H1 (cell line): ENCODE measurements at regions of chr5 and their contacts with region 1.

Region 1: GRCh38 chr5:1511651-1512540 is 11.9 kb downstream of the LPCAT1 start:
- DNase-seq: peak in 1 of 2 experiments; percentile 45
- H3K4me3 ChIP-seq: no peak overlapping the region
- H3K27ac ChIP-seq: peak overlapping the region; percentile 46; the same call in 1 of the 2 replicates
- H3K4me1 ChIP-seq: peaks cover 16 to 64% (median 51%) of the 10 kb centered on the region in 4 experiments
- H3K27me3 ChIP-seq: no peaks in the 10 kb centered on the region
- CTCF ChIP-seq: peak in 2 of 3 experiments; percentile 49 to 74; a peak in 3 of 4 replicates
- EP300 ChIP-seq: no peak
- POLR2A ChIP-seq: no peak
- RAD21 ChIP-seq: peak; percentile 40 to 63

Region 2: GRCh38 chr5:1488943-1489680 is 22.8 kb before region 1 on chr5:
- CTCF ChIA-PET with region 1: interaction called, 9 read pairs
- POLR2A ChIA-PET with region 1: interaction called, 10 read pairs
- DNase-seq: no peak
- H3K4me3 ChIP-seq: no peak overlapping the region
- H3K27ac ChIP-seq: no peak overlapping the region
- H3K4me1 ChIP-seq: no peaks in the 10 kb centered on the region
- H3K27me3 ChIP-seq: no peaks in the 10 kb centered on the region
- CTCF ChIP-seq: no peak
- EP300 ChIP-seq: no peak
- POLR2A ChIP-seq: no peak
- RAD21 ChIP-seq: no peak

Region 3: DNA sequence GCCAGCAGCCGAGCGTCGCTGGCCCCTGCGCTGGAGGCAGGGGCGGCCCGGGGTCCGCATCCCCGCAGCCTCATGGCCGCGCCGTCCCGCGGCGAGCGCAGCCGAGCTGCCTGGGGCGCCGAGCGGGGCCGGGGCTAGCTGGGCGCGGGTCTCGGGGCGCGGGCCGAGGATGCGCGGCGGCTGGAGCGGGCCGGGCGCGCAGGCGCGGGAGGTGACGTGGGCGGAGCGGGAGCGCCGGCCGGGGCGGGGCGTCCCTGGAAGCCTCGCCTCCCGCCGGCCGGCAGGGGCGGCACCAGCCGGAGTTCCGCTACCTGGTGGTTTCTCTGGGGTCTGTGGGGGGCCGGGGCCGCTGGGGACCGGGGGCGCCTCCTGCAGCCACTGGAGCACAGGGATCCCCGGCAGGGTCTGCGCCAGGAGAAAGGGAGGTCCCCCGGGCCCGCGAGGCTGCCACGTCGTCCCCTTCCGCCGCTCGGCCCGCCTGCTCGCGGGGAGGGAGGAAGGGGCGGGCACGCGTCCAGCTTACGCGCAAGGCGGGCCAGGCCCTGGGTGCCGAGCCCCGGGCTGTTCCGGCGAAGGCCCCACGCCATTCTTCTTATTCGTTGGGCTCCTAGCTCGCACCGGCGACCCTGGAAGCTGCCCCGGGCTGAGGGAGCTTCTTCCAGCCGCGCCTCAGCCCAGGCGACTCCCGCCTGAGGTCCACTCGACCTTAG is 12.0 kb after region 1 on chr5 and contains the start of gene LPCAT1:
- CTCF ChIA-PET with region 1: interaction called, 15 read pairs
- POLR2A ChIA-PET with region 1: interaction called, 54 read pairs
- DNase-seq: peak in 1 of 2 experiments; percentile 88
- H3K4me3 ChIP-seq: peak within 1 kb of the TSS; percentile 64 to 97 (median 75)
- H3K27ac ChIP-seq: peak within 1 kb of the TSS; percentile 59
- H3K4me1 ChIP-seq: peaks cover 0 to 24% (median 22%) of the 10 kb centered on the region in 4 experiments; a peak in 6 of 7 replicates
- H3K27me3 ChIP-seq: no peaks in the 10 kb centered on the region; a peak in 1 of 7 replicates
- CTCF ChIP-seq: no peak
- EP300 ChIP-seq: no peak
- POLR2A ChIP-seq: peak in 1 of 2 experiments; percentile 42; a peak in 1 of 3 replicates
- RAD21 ChIP-seq: peak in 1 of 2 experiments; percentile 7; a peak in 1 of 4 replicates
- total RNA-seq, gene LPCAT1: 260 and 266 TPM in 2 replicates

Region 4: DNA sequence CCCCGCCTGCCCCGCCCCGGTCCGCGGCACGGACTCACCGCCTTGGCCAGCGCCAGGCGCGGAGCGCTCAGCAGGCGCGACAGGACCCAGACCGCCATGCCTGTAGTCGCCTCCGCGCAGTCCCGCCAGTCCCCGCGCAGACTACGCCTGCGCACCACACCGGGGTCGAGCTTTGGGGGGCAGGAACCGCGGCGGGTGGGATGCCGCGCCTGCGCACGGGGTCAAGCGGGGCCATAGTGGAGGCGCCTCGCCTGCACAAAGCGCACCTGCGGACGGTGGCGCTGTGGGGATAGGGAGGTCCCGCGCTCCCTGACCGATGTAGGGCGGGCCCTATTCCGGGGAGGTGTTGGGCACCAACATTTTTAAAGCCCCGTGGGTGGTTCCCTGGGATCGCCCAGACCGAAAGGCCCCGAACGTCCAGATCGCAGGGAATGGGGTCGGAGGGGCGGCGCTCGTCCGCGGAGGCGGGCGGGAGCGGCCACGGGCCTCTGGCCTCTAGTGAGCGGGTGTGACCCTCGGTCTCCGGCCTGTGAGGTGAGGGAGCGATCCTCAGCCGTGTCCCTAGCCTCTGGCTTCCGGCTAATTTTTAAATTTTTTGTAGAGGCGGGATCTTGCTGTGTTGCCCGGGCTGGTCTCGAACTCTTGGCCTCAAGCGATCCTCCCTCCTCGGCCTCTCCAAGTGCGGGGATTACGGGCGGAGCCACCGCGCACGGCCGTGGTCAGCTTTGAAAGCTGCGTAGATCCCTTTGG is 82.6 kb after region 1 on chr5:
- CTCF ChIA-PET with region 1: interaction called, 10 read pairs
- POLR2A ChIA-PET with region 1: interaction called, 5 read pairs
- DNase-seq: peak; percentile 81 to 94
- H3K4me3 ChIP-seq: peak overlapping the region; percentile 61 to 82 (median 72)
- H3K27ac ChIP-seq: no peak overlapping the region
- H3K4me1 ChIP-seq: peaks cover 0 to 2% (median 0%) of the 10 kb centered on the region in 4 experiments; a peak in 2 of 7 replicates
- H3K27me3 ChIP-seq: no peaks in the 10 kb centered on the region
- CTCF ChIP-seq: peak; percentile 61 to 79 (median 63)
- EP300 ChIP-seq: no peak; a peak in 1 of 3 replicates
- POLR2A ChIP-seq: peak; percentile 34 to 40; a peak in 2 of 3 replicates
- RAD21 ChIP-seq: peak; percentile 5 to 43; a peak in 2 of 4 replicates

Region 5: GRCh38 chr5:1724822-1725643 is 213.1 kb after region 1 on chr5:
- CTCF ChIA-PET with region 1: no interaction called
- POLR2A ChIA-PET with region 1: no interaction called
- DNase-seq: peak in 1 of 2 experiments; percentile 73
- H3K4me3 ChIP-seq: peak overlapping the region; percentile 27 to 53 (median 36)
- H3K27ac ChIP-seq: no peak overlapping the region
- H3K4me1 ChIP-seq: peaks cover 0 to 17% (median 14%) of the 10 kb centered on the region in 4 experiments; a peak in 6 of 7 replicates
- H3K27me3 ChIP-seq: peaks cover 0 to 9% (median 3%) of the 10 kb centered on the region in 4 experiments; a peak in 2 of 7 replicates
- CTCF ChIP-seq: no peak
- EP300 ChIP-seq: no peak
- POLR2A ChIP-seq: no peak
- RAD21 ChIP-seq: no peak